Breast epithelium (tissue), 4 donors: ENCODE measurements at regions of chr2 and their contacts with region 1.

Region 1: GRCh38 chr2:213151437-213152064 is at the start of gene IKZF2:
- DNase-seq: peak; percentile 66 to 77
- H3K4me3 ChIP-seq: peak within 1 kb of the TSS; percentile 81 to 94 (median 85)
- H3K27ac ChIP-seq: peak within 1 kb of the TSS; percentile 96 to 98
- H3K4me1 ChIP-seq: peaks cover 0 to 12% of the 10 kb centered on the region in 2 donors
- H3K27me3 ChIP-seq: no peaks in the 10 kb centered on the region
- CTCF ChIP-seq: no peak
- POLR2A ChIP-seq: no peak
- total RNA-seq, gene IKZF2: 8.0 to 34.4 (median 22.0) TPM

Region 2: GRCh38 chr2:212777020-212777491 is 374.5 kb before region 1 on chr2:
- intact Hi-C with region 1: loop called (anchors 5 kb)
- DNase-seq: no peak
- H3K4me3 ChIP-seq: no peak overlapping the region
- H3K27ac ChIP-seq: no peak overlapping the region
- H3K4me1 ChIP-seq: no peaks in the 10 kb centered on the region
- H3K27me3 ChIP-seq: no peaks in the 10 kb centered on the region
- CTCF ChIP-seq: peak; percentile 48 to 67 (median 61)
- POLR2A ChIP-seq: no peak

Region 3: GRCh38 chr2:213185147-213185822 is 33.7 kb after region 1 on chr2:
- intact Hi-C with region 1: no loop called
- DNase-seq: no peak
- H3K4me3 ChIP-seq: no peak overlapping the region
- H3K27ac ChIP-seq: no peak overlapping the region
- H3K4me1 ChIP-seq: no peaks in the 10 kb centered on the region
- H3K27me3 ChIP-seq: no peaks in the 10 kb centered on the region
- CTCF ChIP-seq: no peak
- POLR2A ChIP-seq: no peak